ENCODE measurements at regions of chr7 and their contacts with region 1.

Region 1: DNA sequence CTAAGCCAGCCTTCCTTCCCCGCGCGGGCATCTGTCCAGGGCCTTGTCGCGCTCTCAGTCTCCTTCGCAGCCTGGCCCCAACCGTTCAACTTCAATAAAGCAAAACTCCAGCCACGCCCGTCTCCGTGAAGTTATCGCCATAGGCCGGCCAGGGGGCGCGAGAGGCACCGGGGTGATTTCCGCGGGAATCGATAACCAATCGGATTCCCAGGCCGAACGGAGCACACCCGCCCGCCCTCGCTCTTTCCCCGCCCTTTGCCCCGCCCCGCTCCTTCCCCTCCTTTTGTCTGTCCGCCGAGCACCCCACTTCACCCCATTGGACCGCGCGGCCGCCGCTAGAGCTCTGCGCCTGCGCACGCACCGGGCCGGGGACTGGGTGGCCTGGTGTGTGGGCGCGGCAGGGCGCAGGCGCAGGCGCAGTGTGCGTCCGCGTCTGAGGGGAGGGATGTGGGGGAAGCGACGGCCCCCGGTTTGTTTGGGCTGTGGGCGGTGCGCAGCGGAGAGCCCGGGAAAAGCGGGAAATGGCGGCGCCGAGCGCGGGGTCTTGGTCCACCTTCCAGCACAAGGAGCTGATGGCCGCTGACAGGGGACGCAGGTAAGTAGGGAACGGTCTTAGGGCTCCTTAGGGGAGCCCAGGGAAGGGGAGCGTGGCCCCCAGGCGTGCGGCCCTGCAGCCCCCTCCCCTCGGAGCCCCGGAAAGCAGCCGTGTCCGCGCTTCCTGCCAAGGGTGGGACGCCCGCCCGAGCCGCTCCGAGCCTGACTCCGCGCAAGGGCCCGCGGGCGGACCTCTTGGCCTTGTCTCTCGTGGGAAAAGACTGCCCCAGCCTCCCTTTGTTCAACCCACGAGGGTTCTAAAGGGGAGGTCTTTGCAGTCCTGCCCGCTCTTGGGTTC is at the start of gene CASP2:
- DNase-seq: peak; percentile 91 to 98 (median 96)
- H3K4me3 ChIP-seq: peak within 1 kb of the TSS; percentile 62 to 100 (median 98)
- H3K27ac ChIP-seq: peak within 1 kb of the TSS; percentile 72 to 98 (median 95)
- H3K27me3 ChIP-seq: no peaks in the 10 kb centered on the region
- CTCF ChIP-seq: peak in 52 of 56 donors; percentile 12 to 70 (median 52)
- total RNA-seq, gene CASP2: 10.0 to 28.4 (median 18.1) TPM

Region 2: GRCh38 chr7:142853739-142854371 is 434.3 kb before region 1 on chr7:
- intact Hi-C with region 1: loop called in 1 of 2 experiments (anchors 5 kb)
- DNase-seq: peak in 5 of 10 donors; percentile 52 to 74 (median 67)
- H3K4me3 ChIP-seq: peak overlapping the region; percentile 52 to 89 (median 76)
- H3K27ac ChIP-seq: peak overlapping the region in 57 of 59 donors; percentile 15 to 93 (median 82)
- H3K27me3 ChIP-seq: no peaks in the 10 kb centered on the region
- CTCF ChIP-seq: peak; percentile 46 to 88 (median 76)

Region 3: DNA sequence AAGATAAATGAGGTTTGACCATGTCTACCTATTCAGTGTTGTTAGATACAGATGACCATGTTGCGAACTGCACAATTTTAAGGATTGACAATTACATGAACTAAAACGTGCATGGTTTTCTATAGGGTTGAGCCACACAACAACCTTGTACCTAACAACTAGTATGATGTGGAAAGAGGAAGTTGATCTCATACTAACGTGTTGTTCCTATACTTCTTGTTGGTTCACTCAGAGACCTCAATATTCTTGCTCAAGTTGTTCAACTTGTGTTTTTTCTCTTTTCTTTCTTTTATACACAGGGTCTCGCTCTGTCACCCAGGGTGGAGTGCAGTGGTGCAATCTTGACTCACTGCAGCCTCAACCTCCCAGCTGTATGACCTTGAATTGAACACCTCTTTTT is 320.0 kb before region 1 on chr7:
- intact Hi-C with region 1: no loop called
- DNase-seq: no peak
- H3K4me3 ChIP-seq: no peak overlapping the region
- H3K27ac ChIP-seq: no peak overlapping the region
- H3K27me3 ChIP-seq: peaks cover 0 to 4% (median 0%) of the 10 kb centered on the region in 45 donors
- CTCF ChIP-seq: no peak

Region 4: GRCh38 chr7:143240291-143241168 is 47.7 kb before region 1 on chr7:
- intact Hi-C with region 1: loop called (anchors 5 kb)
- DNase-seq: peak; percentile 48 to 83 (median 68)
- H3K4me3 ChIP-seq: peak overlapping the region in 19 of 59 donors; percentile 5 to 47 (median 17)
- H3K27ac ChIP-seq: peak overlapping the region in 13 of 59 donors; percentile 1 to 80 (median 41)
- H3K27me3 ChIP-seq: no peaks in the 10 kb centered on the region
- CTCF ChIP-seq: peak; percentile 81 to 99 (median 95)

Region 5: DNA sequence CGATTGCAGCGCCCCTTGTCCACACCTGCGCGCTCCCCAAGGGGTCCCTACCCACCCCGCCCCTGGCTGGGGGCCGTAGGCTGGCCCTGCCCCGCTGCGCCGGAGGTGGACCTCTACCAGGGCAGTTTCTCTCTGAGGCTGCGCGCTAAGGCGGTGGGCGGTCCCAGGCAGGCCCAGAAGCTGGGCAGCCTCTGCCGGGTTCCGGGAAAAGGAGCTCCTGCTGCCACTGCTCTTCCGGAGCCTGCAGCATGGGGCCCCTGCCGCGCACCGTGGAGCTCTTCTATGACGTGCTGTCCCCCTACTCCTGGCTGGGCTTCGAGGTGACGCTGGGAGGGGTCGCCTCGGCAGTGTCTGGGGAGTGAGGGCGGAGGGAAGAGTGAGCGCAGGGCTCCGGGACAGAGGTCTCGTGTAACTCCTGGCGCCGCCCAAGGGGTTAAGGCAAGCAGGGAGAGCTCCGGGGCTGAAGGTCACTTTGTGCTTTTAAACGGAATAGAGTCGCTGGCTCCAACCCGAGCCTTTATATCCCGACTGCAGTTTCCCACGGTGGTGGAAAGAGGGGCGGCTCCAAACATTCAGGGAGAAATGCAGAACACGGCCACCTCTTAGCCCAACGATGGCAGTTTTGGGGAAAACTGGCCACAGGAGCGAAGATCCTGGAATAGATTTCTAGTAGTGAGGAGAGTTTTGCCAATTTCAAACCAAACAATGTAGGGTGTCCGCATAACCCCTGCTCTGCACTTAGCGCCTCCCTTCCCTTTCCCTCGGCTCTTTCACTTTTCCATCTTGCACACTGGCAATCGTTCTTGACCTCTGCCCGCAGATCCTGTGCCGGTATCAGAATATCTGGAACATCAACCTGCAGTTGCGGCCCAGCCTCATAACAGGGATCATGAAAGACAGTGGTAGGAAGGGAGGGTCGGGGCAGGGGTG is 24.6 kb before region 1 on chr7 and contains the start of gene GSTK1:
- intact Hi-C with region 1: loop called in 1 of 2 experiments (anchors 2 kb)
- DNase-seq: peak; percentile 72 to 94 (median 88)
- H3K4me3 ChIP-seq: peak within 1 kb of the TSS; percentile 61 to 99 (median 86)
- H3K27ac ChIP-seq: peak within 1 kb of the TSS; percentile 11 to 97 (median 86)
- H3K27me3 ChIP-seq: no peaks in the 10 kb centered on the region
- CTCF ChIP-seq: peak in 21 of 56 donors; percentile 5 to 53 (median 18)
- total RNA-seq, gene GSTK1: 60.1 to 106 (median 86.5) TPM

Region 6: GRCh38 chr7:143362131-143363015 is 74.2 kb after region 1 on chr7 and contains the start of gene FAM131B:
- intact Hi-C with region 1: loop called in 1 of 2 experiments (anchors 5 kb)
- DNase-seq: peak in 2 of 10 donors; percentile 76 to 80
- H3K4me3 ChIP-seq: peak within 1 kb of the TSS; percentile 45 to 95 (median 84)
- H3K27ac ChIP-seq: peak within 1 kb of the TSS; percentile 79 to 99 (median 97)
- H3K27me3 ChIP-seq: no peaks in the 10 kb centered on the region
- CTCF ChIP-seq: peak in 5 of 56 donors; percentile 14 to 22 (median 16)
- total RNA-seq, gene FAM131B: 83.0 to 177 (median 133) TPM

Region 7: DNA sequence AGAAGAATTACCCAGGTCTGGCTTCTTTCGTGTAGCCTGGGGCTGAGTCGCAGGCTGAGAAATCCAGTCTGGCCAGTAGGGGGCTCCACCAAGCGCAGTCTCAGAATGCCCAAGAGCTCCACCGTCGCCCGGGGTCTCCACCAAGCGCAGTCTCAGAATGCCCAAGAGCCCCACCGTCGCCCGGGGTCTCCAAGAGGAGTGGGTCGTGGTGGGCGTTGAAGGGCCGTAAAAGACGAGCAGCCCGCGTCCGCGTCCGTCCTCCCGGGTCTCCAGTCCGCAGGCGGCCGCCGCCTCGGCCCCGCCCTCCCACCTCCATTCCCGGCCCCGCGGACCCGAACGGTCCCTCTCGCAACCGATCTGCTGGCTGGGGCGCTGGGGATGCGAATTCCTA is 92.1 kb after region 1 on chr7:
- intact Hi-C with region 1: loop called in 1 of 2 experiments (anchors 5 kb)
- DNase-seq: peak; percentile 80 to 89 (median 86)
- H3K4me3 ChIP-seq: peak overlapping the region; percentile 67 to 99 (median 91)
- H3K27ac ChIP-seq: peak overlapping the region; percentile 80 to 100 (median 97)
- H3K27me3 ChIP-seq: no peaks in the 10 kb centered on the region
- CTCF ChIP-seq: peak; percentile 74 to 98 (median 89)